Sigmoid colon (tissue), 7 donors: ENCODE measurements at regions of chr7 and their contacts with region 1.

Region 1: GRCh38 chr7:28037220-28038010 is 143.2 kb downstream of the JAZF1 start:
- DNase-seq: no peak
- H3K4me3 ChIP-seq: no peak overlapping the region
- H3K27ac ChIP-seq: peak overlapping the region; percentile 71 to 82 (median 76)
- H3K4me1 ChIP-seq: peaks cover 0 to 82% (median 58%) of the 10 kb centered on the region in 4 donors
- H3K27me3 ChIP-seq: no peaks in the 10 kb centered on the region
- CTCF ChIP-seq: no peak
- EP300 ChIP-seq: peak in 3 of 4 donors; percentile 47 to 87 (median 87)
- POLR2A ChIP-seq: no peak

Region 2: GRCh38 chr7:28062197-28062991 is 25.0 kb after region 1 on chr7:
- intact Hi-C with region 1: loop called (anchors 1 kb)
- DNase-seq: peak; percentile 90
- H3K4me3 ChIP-seq: no peak overlapping the region
- H3K27ac ChIP-seq: peak overlapping the region in 3 of 4 donors; percentile 80 to 85 (median 81)
- H3K4me1 ChIP-seq: peaks cover 0 to 74% (median 64%) of the 10 kb centered on the region in 4 donors
- H3K27me3 ChIP-seq: no peaks in the 10 kb centered on the region
- CTCF ChIP-seq: peak in 3 of 4 experiments; percentile 44 to 68 (median 60)
- EP300 ChIP-seq: no peak
- POLR2A ChIP-seq: no peak

Region 3: GRCh38 chr7:28078036-28078901 is 40.9 kb after region 1 on chr7:
- intact Hi-C with region 1: loop called (anchors 5 kb)
- DNase-seq: no peak
- H3K4me3 ChIP-seq: no peak overlapping the region
- H3K27ac ChIP-seq: peak overlapping the region in 2 of 4 donors; percentile 45 to 53
- H3K4me1 ChIP-seq: peaks cover 0 to 86% (median 52%) of the 10 kb centered on the region in 4 donors
- H3K27me3 ChIP-seq: no peaks in the 10 kb centered on the region
- CTCF ChIP-seq: peak; percentile 84 to 96 (median 89)
- EP300 ChIP-seq: no peak
- POLR2A ChIP-seq: no peak